ENCODE measurements at regions of chrX and their contacts with region 1.

Region 1: DNA sequence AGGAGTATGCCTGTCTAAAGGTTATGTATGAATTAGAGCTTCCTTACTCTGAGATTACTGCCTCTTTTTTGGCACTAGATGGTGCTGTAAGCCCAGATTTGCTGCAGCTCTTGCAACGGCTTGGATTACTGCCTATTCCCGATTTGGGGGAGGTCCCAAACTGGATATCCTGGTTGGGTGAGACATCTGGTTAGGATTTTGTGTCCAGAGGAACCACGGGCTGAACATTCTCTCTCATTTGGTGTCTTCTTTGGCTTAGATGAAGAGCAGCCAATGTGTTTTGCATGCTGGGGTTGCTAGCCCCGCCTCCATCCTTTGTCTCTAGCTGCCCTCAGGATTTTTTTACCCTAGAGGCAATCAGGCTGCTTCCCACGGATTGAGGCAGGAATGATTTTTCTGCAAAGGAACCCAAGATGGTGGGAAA is 31.9 kb downstream of the F8A1 start:
- DNase-seq: peak; percentile 32 to 74
- ATAC-seq: peak; percentile 85 to 94
- H3K4me3 ChIP-seq: peak overlapping the region; percentile 29; the same call in 2 of the 3 replicates
- H3K27ac ChIP-seq: 0 out of 6 replicates have a peak overlapping the region, but pooled peaks of 1 of the 2 experiments have one; percentile 13
- H3K4me1 ChIP-seq: no peaks in the 10 kb centered on the region
- CTCF ChIP-seq: peak; percentile 86
- EP300 ChIP-seq: no peak
- POLR2A ChIP-seq: no peak
- RAD21 ChIP-seq: peak; percentile 89 to 90

Region 2: DNA sequence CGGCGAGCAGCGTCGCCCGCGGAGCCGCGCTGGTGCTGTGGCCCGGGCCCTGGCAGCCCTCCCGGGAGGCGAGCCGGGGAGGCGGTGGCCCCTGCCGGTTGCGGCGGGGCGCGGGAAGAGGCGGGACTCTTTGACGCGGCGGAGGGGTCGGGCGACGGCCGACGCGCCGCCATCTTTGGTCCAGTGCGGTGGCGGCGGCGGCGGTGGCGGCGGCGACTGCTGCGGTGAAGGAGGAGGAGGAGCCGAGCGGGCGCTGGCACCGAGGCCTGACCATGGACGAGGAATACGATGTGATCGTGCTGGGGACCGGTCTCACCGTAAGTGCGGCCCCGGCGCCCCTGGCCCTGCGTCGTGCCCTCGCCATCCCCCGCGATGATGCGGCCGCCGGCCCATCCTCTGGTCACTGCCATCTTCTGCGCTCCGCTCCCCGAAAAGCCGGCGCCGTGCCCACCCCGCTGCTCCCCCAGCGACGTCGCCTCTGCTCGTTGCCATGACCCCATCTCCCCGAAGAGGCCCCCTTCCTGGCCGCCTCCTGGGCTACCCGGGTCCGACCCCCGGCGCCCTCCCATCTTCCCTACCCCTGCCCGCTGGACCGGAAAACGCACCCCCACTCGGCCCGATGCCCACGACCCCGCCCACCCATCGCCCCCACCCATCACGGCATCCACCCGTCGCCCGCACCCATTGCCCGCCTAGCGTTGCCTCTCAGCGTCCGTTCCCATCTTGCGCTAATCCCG is 480.9 kb before region 1 on chrX and contains the start of gene GDI1:
- CTCF ChIA-PET with region 1: no interaction called
- POLR2A ChIA-PET with region 1: no interaction called
- DNase-seq: peak; percentile 58 to 75
- ATAC-seq: peak; percentile 66 to 74; a peak in 5 of 6 replicates
- H3K4me3 ChIP-seq: peak within 1 kb of the TSS; percentile 97
- H3K27ac ChIP-seq: peak within 1 kb of the TSS; percentile 100
- H3K4me1 ChIP-seq: peaks cover 12% of the 10 kb centered on the region; the same call in 1 of the 3 replicates
- CTCF ChIP-seq: no peak
- EP300 ChIP-seq: no peak
- POLR2A ChIP-seq: peak; percentile 71
- RAD21 ChIP-seq: no peak
- polyA plus RNA-seq, gene GDI1: 117 and 124 TPM in 2 replicates

Region 3: GRCh38 chrX:155001873-155002272 is 83.8 kb after region 1 on chrX:
- CTCF ChIA-PET with region 1: no interaction called
- POLR2A ChIA-PET with region 1: no interaction called
- DNase-seq: no peak
- ATAC-seq: no peak
- H3K4me3 ChIP-seq: no peak overlapping the region
- H3K27ac ChIP-seq: no peak overlapping the region
- H3K4me1 ChIP-seq: no peaks in the 10 kb centered on the region
- CTCF ChIP-seq: no peak
- EP300 ChIP-seq: no peak
- POLR2A ChIP-seq: no peak
- RAD21 ChIP-seq: no peak

Region 4: GRCh38 chrX:155148724-155149537 is 230.9 kb after region 1 on chrX:
- CTCF ChIA-PET with region 1: interaction called, 11 read pairs
- POLR2A ChIA-PET with region 1: no interaction called
- DNase-seq: peak; percentile 5 to 22
- ATAC-seq: peak in 1 of 2 experiments; percentile 73; a peak in 3 of 6 replicates
- H3K4me3 ChIP-seq: no peak overlapping the region
- H3K27ac ChIP-seq: no peak overlapping the region
- H3K4me1 ChIP-seq: no peaks in the 10 kb centered on the region
- CTCF ChIP-seq: peak; percentile 40
- EP300 ChIP-seq: no peak
- POLR2A ChIP-seq: no peak
- RAD21 ChIP-seq: peak in 1 of 2 experiments; percentile 30; a peak in 2 of 5 replicates